ENCODE measurements at regions of chr11 and their contacts with region 1.

Region 1: GRCh38 chr11:125568970-125569914 is at the start of gene EI24:
- DNase-seq: peak; percentile 93
- H3K4me3 Mint-ChIP-seq: peak within 1 kb of the TSS; percentile 92
- H3K27ac Mint-ChIP-seq: peak within 1 kb of the TSS; percentile 91
- H3K4me1 Mint-ChIP-seq: peaks cover 21% of the 10 kb centered on the region
- H3K27me3 Mint-ChIP-seq: no peaks in the 10 kb centered on the region
- total RNA-seq, gene EI24: 28.7 to 29.1 TPM

Region 2: GRCh38 chr11:125295931-125296330 is 273.3 kb before region 1 on chr11:
- CTCF ChIA-PET with region 1: no interaction called
- POLR2A ChIA-PET with region 1: no interaction called
- intact Hi-C with region 1: no loop called
- DNase-seq: no peak
- H3K4me3 Mint-ChIP-seq: no peak overlapping the region
- H3K27ac Mint-ChIP-seq: no peak overlapping the region
- H3K4me1 Mint-ChIP-seq: no peaks in the 10 kb centered on the region
- H3K27me3 Mint-ChIP-seq: peaks cover 8% of the 10 kb centered on the region

Region 3: GRCh38 chr11:125348674-125349309 is 220.4 kb before region 1 on chr11:
- CTCF ChIA-PET with region 1: no interaction called
- POLR2A ChIA-PET with region 1: no interaction called
- intact Hi-C with region 1: no loop called
- DNase-seq: peak; percentile 51
- H3K4me3 Mint-ChIP-seq: no peak overlapping the region
- H3K27ac Mint-ChIP-seq: no peak overlapping the region
- H3K4me1 Mint-ChIP-seq: no peaks in the 10 kb centered on the region
- H3K27me3 Mint-ChIP-seq: peaks cover 7% of the 10 kb centered on the region

Region 4: GRCh38 chr11:125514336-125515101 is 54.7 kb before region 1 on chr11:
- CTCF ChIA-PET with region 1: no interaction called
- POLR2A ChIA-PET with region 1: no interaction called
- intact Hi-C with region 1: loop called (anchors 1 kb)
- DNase-seq: peak; percentile 79
- H3K4me3 Mint-ChIP-seq: no peak overlapping the region
- H3K27ac Mint-ChIP-seq: peak overlapping the region; percentile 82
- H3K4me1 Mint-ChIP-seq: peaks cover 25% of the 10 kb centered on the region
- H3K27me3 Mint-ChIP-seq: no peaks in the 10 kb centered on the region

Region 5: GRCh38 chr11:125532668-125533067 is 36.6 kb before region 1 on chr11:
- CTCF ChIA-PET with region 1: no interaction called
- POLR2A ChIA-PET with region 1: no interaction called
- intact Hi-C with region 1: no loop called
- DNase-seq: no peak
- H3K4me3 Mint-ChIP-seq: no peak overlapping the region
- H3K27ac Mint-ChIP-seq: no peak overlapping the region
- H3K4me1 Mint-ChIP-seq: no peaks in the 10 kb centered on the region
- H3K27me3 Mint-ChIP-seq: peaks cover 2% of the 10 kb centered on the region

Region 6: GRCh38 chr11:125586623-125587022 is 17.4 kb after region 1 on chr11:
- CTCF ChIA-PET with region 1: interaction called, 18 read pairs
- POLR2A ChIA-PET with region 1: interaction called, 72 read pairs
- intact Hi-C with region 1: loop called (anchors 1 kb)
- DNase-seq: no peak
- H3K4me3 Mint-ChIP-seq: no peak overlapping the region
- H3K27ac Mint-ChIP-seq: no peak overlapping the region
- H3K4me1 Mint-ChIP-seq: peaks cover 23% of the 10 kb centered on the region
- H3K27me3 Mint-ChIP-seq: no peaks in the 10 kb centered on the region

Region 7: DNA sequence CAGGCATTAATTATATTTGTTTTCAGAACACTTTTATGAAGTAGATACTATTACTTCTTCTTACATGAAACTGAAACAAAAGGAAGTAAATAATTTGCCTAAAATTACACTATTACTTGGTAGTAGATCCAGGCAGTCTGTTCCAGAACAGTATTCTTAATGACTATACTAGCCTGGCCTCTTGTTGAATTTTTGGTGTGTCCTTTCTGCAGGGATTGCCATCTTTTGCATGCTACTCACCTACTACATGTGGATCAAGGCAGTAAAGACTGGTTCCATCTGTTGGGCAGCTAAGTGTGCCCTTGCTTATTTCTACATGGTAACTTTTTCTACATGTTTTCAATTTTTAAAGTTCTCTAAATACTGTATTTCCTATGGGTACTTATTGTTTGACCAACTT is 36.2 kb after region 1 on chr11:
- CTCF ChIA-PET with region 1: no interaction called
- POLR2A ChIA-PET with region 1: no interaction called
- intact Hi-C with region 1: loop called (anchors 5 kb)
- DNase-seq: no peak
- H3K4me3 Mint-ChIP-seq: no peak overlapping the region
- H3K27ac Mint-ChIP-seq: no peak overlapping the region
- H3K4me1 Mint-ChIP-seq: no peaks in the 10 kb centered on the region
- H3K27me3 Mint-ChIP-seq: no peaks in the 10 kb centered on the region

Region 8: GRCh38 chr11:125625630-125626287 is 56.5 kb after region 1 on chr11:
- CTCF ChIA-PET with region 1: interaction called, 4 read pairs
- POLR2A ChIA-PET with region 1: interaction called, 18 read pairs
- intact Hi-C with region 1: loop called (anchors 1 kb)
- DNase-seq: peak; percentile 92
- H3K4me3 Mint-ChIP-seq: peak overlapping the region; percentile 88
- H3K27ac Mint-ChIP-seq: peak overlapping the region; percentile 93
- H3K4me1 Mint-ChIP-seq: peaks cover 21% of the 10 kb centered on the region
- H3K27me3 Mint-ChIP-seq: no peaks in the 10 kb centered on the region

Region 9: DNA sequence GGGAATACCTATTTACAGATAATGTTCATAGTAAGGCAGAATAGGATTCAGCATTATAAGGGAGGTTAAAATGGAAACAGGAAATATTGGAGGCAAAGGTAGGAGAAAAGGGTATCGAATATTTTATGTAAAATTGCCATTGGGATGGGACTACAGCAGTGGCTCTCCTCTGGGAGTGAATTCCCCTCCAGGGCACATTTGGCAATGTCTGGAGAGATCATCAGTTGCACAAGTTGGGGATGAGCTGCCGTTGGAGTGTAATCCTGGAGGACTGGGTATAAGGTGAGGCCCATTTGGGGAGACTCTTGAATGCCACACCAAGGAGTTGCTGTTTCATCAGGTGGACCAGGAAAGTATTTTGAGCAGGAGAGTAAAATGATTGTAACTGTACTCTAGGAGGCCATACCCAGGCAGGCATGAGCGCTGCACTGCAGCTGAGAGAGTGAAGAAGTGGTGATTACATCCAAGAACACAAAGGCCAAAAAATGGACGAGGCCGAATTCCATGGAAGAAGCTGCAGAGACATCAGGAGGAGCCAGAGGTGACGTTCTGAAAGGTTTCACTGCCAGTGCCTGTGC is 120.1 kb after region 1 on chr11:
- CTCF ChIA-PET with region 1: no interaction called
- POLR2A ChIA-PET with region 1: no interaction called
- intact Hi-C with region 1: no loop called
- DNase-seq: no peak
- H3K4me3 Mint-ChIP-seq: no peak overlapping the region
- H3K27ac Mint-ChIP-seq: no peak overlapping the region
- H3K4me1 Mint-ChIP-seq: no peaks in the 10 kb centered on the region
- H3K27me3 Mint-ChIP-seq: peaks cover 2% of the 10 kb centered on the region

Region 10: DNA sequence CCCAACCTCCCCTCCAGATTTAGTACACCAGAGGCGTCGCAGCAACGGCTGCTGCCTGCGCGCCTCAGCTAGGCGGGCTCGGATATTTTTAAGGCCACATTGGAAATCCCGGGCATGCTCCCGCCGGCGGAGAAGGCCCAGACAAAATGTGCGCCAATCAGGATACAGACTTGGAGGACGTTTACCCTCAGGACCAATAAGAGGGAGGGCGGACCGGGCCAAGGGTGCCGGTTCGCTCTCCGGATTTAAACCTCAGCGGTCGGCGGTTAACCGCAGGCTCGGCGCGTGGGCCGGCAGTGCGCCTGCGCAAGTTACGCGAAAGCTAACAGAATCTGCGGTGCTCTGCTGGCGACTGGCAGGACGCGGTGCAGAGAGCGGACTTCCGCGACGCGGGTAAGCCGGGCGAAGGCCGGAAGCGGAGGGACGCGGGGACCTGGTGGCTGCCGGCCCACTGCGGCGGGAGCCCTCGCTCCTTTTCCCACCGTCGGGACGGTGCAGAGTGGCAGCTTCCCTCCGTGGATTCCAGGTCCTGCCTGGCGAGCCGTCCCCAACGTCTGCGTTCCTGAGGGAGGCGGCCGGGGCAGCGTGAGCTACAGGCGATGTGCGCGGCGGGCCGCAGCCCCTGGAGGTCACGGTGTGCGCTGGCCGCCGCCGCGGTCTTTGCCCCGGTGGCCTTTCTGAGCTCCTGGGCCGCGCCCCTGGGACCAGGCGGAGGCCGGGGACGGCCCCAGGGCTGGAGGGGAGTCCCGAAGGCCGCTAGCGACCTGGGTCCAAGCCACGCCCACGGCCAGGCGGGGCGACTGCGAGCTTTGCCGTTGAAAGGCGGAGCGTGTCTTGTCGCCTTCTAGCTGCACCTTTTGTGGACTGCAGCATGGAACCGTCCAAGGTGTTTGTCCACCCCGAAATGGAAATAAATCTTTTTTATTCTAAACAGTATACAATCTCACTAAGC is 318.4 kb after region 1 on chr11 and contains the start of gene HYLS1:
- CTCF ChIA-PET with region 1: interaction called, 4 read pairs
- POLR2A ChIA-PET with region 1: interaction called, 13 read pairs
- intact Hi-C with region 1: loop called (anchors 1 kb)
- DNase-seq: peak; percentile 99
- H3K4me3 Mint-ChIP-seq: peak within 1 kb of the TSS; percentile 74
- H3K27ac Mint-ChIP-seq: peak within 1 kb of the TSS; percentile 93
- H3K4me1 Mint-ChIP-seq: peaks cover 31% of the 10 kb centered on the region
- H3K27me3 Mint-ChIP-seq: peaks cover 6% of the 10 kb centered on the region
- total RNA-seq, gene HYLS1: 8.2 to 8.3 TPM

Measured in activated CD4-positive, alpha-beta memory T cell treated with anti-CD3 and anti-CD28 coated beads for 36 hours (primary cell).